ENCODE measurements at regions of chr3 and their contacts with region 1.

Region 1: GRCh38 chr3:114056130-114057010 is at the starts of genes CCDC191 and QTRT2:
- DNase-seq: peak; percentile 100
- H3K4me3 Mint-ChIP-seq: peak within 1 kb of the TSS; percentile 93
- H3K27ac Mint-ChIP-seq: peak within 1 kb of the TSS; percentile 95
- H3K4me1 Mint-ChIP-seq: peaks cover 30% of the 10 kb centered on the region
- H3K27me3 Mint-ChIP-seq: peaks cover 2% of the 10 kb centered on the region
- total RNA-seq, gene CCDC191: 0.66 and 1.7 TPM in 2 replicates
- total RNA-seq, gene QTRT2: 50.5 and 55.3 TPM in 2 replicates

Region 2: DNA sequence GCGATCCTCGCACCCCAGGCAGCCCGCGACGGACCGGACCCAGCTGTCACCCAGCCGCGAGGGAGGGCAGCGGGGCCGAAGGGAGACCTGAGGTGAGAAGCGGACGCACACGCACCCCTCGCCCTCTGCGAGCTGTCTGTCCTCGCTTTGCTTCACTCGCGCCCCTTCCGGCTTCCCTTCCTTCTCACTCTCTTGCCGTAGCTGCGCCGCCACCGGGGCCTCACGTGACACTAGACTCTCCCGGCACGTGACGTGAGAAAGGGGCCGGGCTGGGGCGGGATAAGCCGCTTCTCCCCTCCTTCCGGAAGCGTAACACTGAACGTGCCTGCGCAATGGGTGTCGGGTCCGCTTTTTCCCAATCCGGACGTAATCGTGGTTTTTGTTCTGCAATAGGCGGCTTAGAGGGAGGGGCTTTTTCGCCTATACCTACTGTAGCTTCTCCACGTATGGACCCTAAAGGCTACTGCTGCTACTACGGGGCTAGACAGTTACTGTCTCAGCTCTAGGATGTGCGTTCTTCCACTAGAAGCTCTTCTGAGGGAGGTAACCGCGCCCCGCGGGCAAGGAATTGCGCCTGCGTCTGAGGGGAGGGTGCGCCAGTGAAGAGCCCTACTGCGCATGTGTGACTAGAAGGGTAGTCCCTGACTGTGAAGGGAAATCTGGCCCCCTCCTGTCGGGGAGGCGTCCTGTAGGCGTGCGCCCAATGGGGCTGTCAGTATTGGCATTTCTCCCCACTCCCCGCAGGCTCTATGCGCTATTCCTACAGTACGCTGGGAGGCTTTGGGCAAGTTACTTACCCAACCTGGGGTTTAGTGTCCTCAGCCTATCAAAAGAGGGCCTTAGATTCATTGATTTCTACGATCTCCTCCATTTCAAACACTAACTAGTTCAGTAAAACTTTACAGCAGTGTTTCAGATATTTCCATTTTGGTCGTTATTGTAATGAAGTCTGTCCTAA is 1494.4 kb before region 1 on chr3 and contains the starts of genes ATG3 and SLC35A5:
- intact Hi-C with region 1: loop called (anchors 2 kb)
- DNase-seq: peak; percentile 100
- H3K4me3 Mint-ChIP-seq: peak within 1 kb of the TSS; percentile 98
- H3K27ac Mint-ChIP-seq: peak within 1 kb of the TSS; percentile 99
- H3K4me1 Mint-ChIP-seq: peaks cover 24% of the 10 kb centered on the region
- H3K27me3 Mint-ChIP-seq: no peaks in the 10 kb centered on the region
- total RNA-seq, gene ATG3: 66.9 and 69.1 TPM in 2 replicates
- total RNA-seq, gene SLC35A5: 15.5 and 16.3 TPM in 2 replicates

Region 3: GRCh38 chr3:113696658-113697499 is 359.5 kb before region 1 on chr3:
- intact Hi-C with region 1: loop called (anchors 1 kb)
- DNase-seq: peak; percentile 100
- H3K4me3 Mint-ChIP-seq: no peak overlapping the region
- H3K27ac Mint-ChIP-seq: no peak overlapping the region
- H3K4me1 Mint-ChIP-seq: peaks cover 27% of the 10 kb centered on the region
- H3K27me3 Mint-ChIP-seq: no peaks in the 10 kb centered on the region

Region 4: DNA sequence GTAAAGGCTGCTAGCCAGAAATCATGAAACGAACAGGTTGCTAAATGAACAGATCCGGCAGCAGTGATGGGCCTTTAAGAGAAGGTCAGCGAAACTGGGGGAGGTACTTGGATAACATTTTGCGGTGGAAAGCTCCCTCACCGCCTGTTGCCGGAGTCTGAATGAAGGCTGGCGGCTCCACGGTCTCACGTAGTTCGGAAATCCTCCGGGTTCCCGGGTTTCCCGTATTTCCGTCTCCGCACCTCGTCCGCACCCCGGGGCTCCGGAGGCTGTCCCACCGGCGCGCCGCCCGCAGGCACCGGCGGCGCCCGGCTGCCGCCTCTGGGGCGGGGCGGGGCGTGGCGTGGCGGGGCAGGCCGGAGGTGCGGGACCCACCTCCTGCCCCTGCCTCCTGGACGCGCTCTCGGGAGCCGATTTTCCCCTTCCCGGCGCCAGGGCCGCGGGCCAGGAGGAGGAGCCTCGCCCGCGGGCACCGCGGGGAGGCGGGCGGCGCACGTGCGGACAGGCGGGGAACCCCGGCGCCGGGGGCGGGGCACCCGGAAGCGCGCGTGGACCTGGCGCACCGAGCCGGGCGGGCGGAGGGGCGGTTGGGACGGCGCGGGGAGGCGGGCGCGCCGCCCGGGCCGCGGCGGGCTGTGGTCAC is 108.9 kb before region 1 on chr3 and contains the start of gene ZDHHC23:
- intact Hi-C with region 1: loop called (anchors 1 kb)
- DNase-seq: peak; percentile 93
- H3K4me3 Mint-ChIP-seq: peak within 1 kb of the TSS; percentile 82
- H3K27ac Mint-ChIP-seq: peak within 1 kb of the TSS; percentile 57
- H3K4me1 Mint-ChIP-seq: peaks cover 10% of the 10 kb centered on the region
- H3K27me3 Mint-ChIP-seq: peaks cover 61% of the 10 kb centered on the region
- total RNA-seq, gene ZDHHC23: 1.9 and 2.4 TPM in 2 replicates

Region 5: DNA sequence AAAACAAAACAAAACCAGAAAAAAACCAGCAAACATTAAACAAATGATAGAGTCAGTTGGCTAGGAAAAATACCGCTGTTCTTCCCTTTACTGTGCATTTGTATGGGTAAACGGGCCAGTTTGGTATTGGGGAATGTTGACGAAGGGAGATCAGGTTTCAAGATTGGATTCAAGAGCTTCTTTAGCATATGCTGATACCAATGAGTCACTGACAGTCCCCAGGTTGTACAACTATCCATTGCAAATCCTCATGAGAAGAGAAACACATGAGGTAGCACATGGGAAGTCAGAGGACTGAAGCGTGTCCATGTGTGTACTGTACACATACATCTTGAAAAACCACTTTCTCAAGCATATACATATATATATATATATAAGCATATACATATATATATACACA is 263.1 kb after region 1 on chr3:
- intact Hi-C with region 1: loop called (anchors 10 kb)
- DNase-seq: no peak
- H3K4me3 Mint-ChIP-seq: no peak overlapping the region
- H3K27ac Mint-ChIP-seq: no peak overlapping the region
- H3K4me1 Mint-ChIP-seq: peaks cover 44% of the 10 kb centered on the region
- H3K27me3 Mint-ChIP-seq: no peaks in the 10 kb centered on the region

Region 6: DNA sequence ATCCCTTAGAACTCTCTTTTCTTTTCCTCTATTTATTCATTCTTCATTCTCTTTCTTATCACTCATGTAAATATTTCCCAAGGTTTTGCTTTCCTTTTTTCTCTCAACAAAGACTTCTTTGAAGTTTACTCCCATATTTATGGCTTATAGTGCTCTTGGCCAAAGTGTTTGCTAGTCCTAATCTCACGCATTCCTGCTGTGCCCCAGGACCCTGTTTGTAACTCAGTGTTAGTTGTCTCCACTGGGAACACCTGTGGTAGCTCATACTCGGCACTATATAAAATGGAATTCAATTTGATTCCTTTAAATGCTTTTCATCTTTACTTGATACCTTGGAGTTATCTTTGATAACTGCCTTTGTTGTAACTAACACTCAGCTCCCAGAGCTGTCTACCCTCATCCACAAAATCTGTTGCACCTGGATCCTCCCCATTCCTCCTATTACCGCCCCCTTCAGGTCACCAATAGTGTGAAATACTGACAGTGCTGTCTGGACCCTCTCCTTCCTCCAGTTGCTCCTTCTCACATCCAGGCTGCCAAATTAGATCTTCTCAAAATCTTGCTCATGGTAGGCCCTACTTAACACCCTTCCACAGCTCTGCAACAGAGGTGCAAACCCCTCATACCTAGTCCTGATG is 314.3 kb after region 1 on chr3:
- intact Hi-C with region 1: no loop called
- DNase-seq: no peak
- H3K4me3 Mint-ChIP-seq: no peak overlapping the region
- H3K27ac Mint-ChIP-seq: no peak overlapping the region
- H3K4me1 Mint-ChIP-seq: no peaks in the 10 kb centered on the region
- H3K27me3 Mint-ChIP-seq: no peaks in the 10 kb centered on the region